IMR-90 (cell line): ENCODE measurements at regions of chr14 and their contacts with region 1.

Region 1: GRCh38 chr14:20855652-20856291 is 35.4 kb upstream of the RNASE3 start:
- DNase-seq: peak; percentile 59
- ATAC-seq: peak; percentile 89
- H3K4me3 ChIP-seq: no peak overlapping the region
- H3K27ac ChIP-seq: no peak overlapping the region
- H3K4me1 ChIP-seq: no peaks in the 10 kb centered on the region
- H3K27me3 ChIP-seq: peaks cover 2% of the 10 kb centered on the region; the same call in 1 of the 2 replicates
- CTCF ChIP-seq: peak; percentile 61
- POLR2A ChIP-seq: no peak
- RAD21 ChIP-seq: peak; percentile 63

Region 2: GRCh38 chr14:21039585-21040369 is 184.0 kb after region 1 on chr14:
- CTCF ChIA-PET with region 1: no interaction called
- POLR2A ChIA-PET with region 1: no interaction called
- dilution Hi-C with region 1: no loop called
- in situ Hi-C with region 1: no loop called
- intact Hi-C with region 1: loop called (anchors 1 kb)
- DNase-seq: peak; percentile 67
- ATAC-seq: peak; percentile 81
- H3K4me3 ChIP-seq: no peak overlapping the region
- H3K27ac ChIP-seq: no peak overlapping the region
- H3K4me1 ChIP-seq: peaks cover 2% of the 10 kb centered on the region; the same call in 1 of the 2 replicates
- H3K27me3 ChIP-seq: peaks cover 36% of the 10 kb centered on the region
- CTCF ChIP-seq: peak; percentile 68
- POLR2A ChIP-seq: no peak
- RAD21 ChIP-seq: peak; percentile 70

Region 3: DNA sequence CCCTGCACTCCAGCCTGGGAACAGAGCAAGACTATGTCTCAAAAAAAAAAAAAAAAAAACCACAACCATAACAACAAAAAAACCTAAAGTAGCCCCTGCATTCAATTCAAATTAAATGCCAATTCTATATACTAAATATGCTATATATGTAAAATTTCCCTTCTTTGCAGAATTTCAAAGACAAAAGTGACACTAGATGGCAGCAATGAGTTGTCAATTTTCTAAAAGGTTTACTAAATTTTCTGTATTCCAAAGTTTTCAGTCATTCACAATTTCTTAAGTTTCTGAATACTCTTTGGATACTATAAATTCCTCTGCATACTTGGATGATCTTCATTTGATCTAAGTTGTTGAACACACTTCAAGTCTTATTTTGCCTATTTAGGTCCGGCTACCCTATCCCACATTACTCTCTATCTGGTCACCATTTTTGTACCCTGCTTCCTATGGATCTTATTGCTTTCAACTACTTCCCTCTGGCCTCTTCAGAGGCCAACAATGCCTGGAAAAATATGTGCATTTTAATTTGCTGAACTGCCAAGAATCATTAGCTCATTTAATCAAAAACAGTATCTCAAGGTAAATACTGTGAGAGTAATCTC is 385.5 kb after region 1 on chr14:
- CTCF ChIA-PET with region 1: no interaction called
- POLR2A ChIA-PET with region 1: no interaction called
- dilution Hi-C with region 1: no loop called
- in situ Hi-C with region 1: no loop called
- intact Hi-C with region 1: no loop called
- DNase-seq: peak; percentile 38
- ATAC-seq: peak; percentile 8; the same call in 1 of the 2 replicates
- H3K4me3 ChIP-seq: no peak overlapping the region
- H3K27ac ChIP-seq: no peak overlapping the region
- H3K4me1 ChIP-seq: peaks cover 1% of the 10 kb centered on the region
- H3K27me3 ChIP-seq: no peaks in the 10 kb centered on the region
- CTCF ChIP-seq: peak; percentile 40
- POLR2A ChIP-seq: no peak
- RAD21 ChIP-seq: peak; percentile 25

Region 4: GRCh38 chr14:21498553-21499526 is 643.1 kb after region 1 on chr14:
- CTCF ChIA-PET with region 1: no interaction called
- POLR2A ChIA-PET with region 1: no interaction called
- dilution Hi-C with region 1: no loop called
- in situ Hi-C with region 1: no loop called
- intact Hi-C with region 1: no loop called
- DNase-seq: peak; percentile 73
- ATAC-seq: peak; percentile 41; the same call in 1 of the 2 replicates
- H3K4me3 ChIP-seq: no peak overlapping the region
- H3K27ac ChIP-seq: peak overlapping the region; percentile 33; the same call in 1 of the 2 replicates
- H3K4me1 ChIP-seq: peaks cover 6% of the 10 kb centered on the region
- H3K27me3 ChIP-seq: no peaks in the 10 kb centered on the region
- CTCF ChIP-seq: peak; percentile 49
- POLR2A ChIP-seq: no peak
- RAD21 ChIP-seq: peak; percentile 46